Aorta (tissue), 5 donors: ENCODE measurements at regions of chr2 and their contacts with region 1.

Region 1: DNA sequence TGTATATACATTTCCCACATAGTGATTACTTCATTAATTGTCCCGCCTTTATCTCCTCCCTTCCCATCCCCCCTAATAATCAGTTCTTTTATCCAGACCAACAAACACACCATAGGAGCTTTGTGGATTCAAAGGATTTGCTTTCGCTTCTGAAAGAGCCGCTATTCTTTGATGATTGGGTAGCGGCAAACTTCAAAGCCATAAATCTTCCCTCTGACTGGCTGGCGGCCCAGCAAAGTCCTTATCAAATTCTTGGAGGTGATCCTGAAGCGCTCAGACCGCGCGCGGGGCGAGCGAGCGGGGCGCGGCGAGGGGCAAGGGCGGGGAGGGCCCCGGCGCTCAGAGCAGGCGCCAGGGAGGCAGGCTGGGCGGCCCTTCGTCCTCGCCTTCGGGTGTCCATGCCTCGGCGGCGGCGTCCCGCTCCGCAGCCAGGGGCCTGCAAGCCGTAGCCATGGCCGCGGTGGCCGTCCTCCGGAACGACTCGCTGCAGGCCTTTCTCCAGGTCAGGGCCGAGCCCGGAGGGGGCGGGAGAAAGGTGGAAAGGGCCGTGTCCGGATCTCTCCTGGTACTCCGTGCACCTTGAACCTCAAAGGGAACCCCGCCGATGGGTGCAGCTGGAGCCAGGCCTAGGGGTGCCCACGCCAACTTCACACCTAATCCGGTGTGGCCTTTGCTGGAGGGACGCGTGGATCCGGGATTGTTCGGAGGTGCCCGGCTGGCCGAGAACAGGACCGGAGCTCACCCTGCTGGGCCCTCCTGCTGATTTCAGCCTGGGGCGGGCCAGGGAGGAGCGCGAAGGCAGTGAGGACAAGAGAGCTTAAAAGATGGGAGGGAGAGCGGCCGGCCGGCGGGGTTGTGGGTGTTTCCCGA is at the start of gene SP5:
- DNase-seq: peak; percentile 50 to 83
- ATAC-seq: peak; percentile 58
- H3K4me3 ChIP-seq: peak within 1 kb of the TSS; percentile 53 to 56
- H3K27ac ChIP-seq: no peak within 1 kb of the TSS
- H3K4me1 ChIP-seq: no peaks in the 10 kb centered on the region
- H3K27me3 ChIP-seq: no peaks in the 10 kb centered on the region
- total RNA-seq, gene SP5: 3.2 to 3.6 TPM

Region 2: DNA sequence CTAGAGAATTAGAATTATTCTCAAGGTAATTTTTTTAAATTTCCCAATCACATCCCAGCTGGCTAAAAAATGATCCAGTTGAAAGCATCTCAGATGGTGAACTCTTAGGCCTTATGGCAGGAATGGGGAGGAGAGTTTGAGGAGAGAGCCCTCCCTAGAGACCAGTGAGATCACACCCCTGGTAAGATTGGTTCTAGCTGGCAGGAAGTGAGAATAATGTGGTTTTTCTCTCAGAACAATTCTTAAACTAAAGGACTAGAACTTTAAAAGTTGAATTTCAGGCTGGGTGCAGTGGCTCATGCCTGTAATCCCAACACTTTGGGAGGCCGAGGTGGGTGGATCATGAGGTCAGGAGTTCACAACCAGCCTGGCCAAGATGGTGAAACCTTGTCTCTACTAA is 417.2 kb before region 1 on chr2:
- intact Hi-C with region 1: no loop called
- DNase-seq: no peak
- ATAC-seq: no peak
- H3K4me3 ChIP-seq: no peak overlapping the region
- H3K27ac ChIP-seq: no peak overlapping the region
- H3K4me1 ChIP-seq: no peaks in the 10 kb centered on the region
- H3K27me3 ChIP-seq: no peaks in the 10 kb centered on the region

Region 3: GRCh38 chr2:170411660-170412059 is 303.6 kb before region 1 on chr2:
- intact Hi-C with region 1: loop called in 1 of 2 experiments (anchors 10 kb)
- DNase-seq: no peak
- ATAC-seq: no peak
- H3K4me3 ChIP-seq: no peak overlapping the region
- H3K27ac ChIP-seq: no peak overlapping the region
- H3K4me1 ChIP-seq: no peaks in the 10 kb centered on the region
- H3K27me3 ChIP-seq: no peaks in the 10 kb centered on the region

Region 4: GRCh38 chr2:170486730-170487129 is 228.6 kb before region 1 on chr2:
- intact Hi-C with region 1: loop called (anchors 5 to 10 kb)
- DNase-seq: no peak
- ATAC-seq: peak; percentile 63
- H3K4me3 ChIP-seq: no peak overlapping the region
- H3K27ac ChIP-seq: no peak overlapping the region
- H3K4me1 ChIP-seq: no peaks in the 10 kb centered on the region
- H3K27me3 ChIP-seq: no peaks in the 10 kb centered on the region

Region 5: GRCh38 chr2:170567429-170567828 is 147.9 kb before region 1 on chr2:
- intact Hi-C with region 1: loop called in 1 of 2 experiments (anchors 5 kb)
- DNase-seq: no peak
- ATAC-seq: no peak
- H3K4me3 ChIP-seq: no peak overlapping the region
- H3K27ac ChIP-seq: no peak overlapping the region
- H3K4me1 ChIP-seq: peaks cover 0 to 4% of the 10 kb centered on the region in 2 donors
- H3K27me3 ChIP-seq: no peaks in the 10 kb centered on the region

Region 6: GRCh38 chr2:170680172-170680941 is 34.9 kb before region 1 on chr2:
- intact Hi-C with region 1: no loop called
- DNase-seq: no peak
- ATAC-seq: no peak
- H3K4me3 ChIP-seq: no peak overlapping the region
- H3K27ac ChIP-seq: no peak overlapping the region
- H3K4me1 ChIP-seq: no peaks in the 10 kb centered on the region
- H3K27me3 ChIP-seq: no peaks in the 10 kb centered on the region

Region 7: DNA sequence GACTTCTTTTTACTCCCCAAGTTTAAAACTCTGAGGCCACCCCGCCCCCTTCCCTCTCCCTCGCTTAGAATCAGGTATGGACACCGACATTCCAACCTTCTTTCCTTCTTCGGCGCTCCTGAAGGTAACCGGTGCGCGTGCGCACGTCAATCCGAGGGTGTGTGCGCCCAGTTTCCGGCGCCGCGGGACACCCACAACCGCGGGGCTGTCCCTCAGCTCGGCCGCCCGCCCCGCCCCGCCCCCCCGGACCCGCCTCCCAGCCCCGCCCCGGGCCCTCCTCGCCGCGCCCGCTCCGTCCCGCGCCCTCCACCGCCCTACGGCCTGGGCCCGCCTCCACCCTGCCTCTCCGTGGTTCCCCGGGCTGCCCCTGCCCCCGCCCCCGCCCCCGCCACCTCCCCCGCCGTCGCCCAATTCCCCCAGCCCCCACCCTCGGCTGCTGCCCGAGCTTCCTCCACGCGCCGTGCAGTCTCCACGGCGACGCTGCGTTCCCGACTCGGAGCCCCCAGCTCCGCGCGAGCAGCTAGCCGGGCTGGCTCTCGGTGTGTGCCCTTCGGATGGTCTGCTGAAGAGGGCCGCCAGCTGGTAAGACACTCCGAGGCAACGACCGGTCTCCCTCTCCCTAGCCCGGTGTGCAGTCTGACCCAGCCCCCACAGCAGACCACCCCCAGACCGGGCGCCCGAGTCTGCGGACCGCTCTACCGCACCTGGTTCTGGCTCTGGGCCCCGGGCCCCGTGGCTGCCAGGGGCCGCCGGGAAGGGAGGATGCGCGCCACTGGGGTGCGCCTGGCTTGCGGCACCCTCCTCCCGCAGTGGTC is 55.5 kb after region 1 on chr2:
- intact Hi-C with region 1: loop called in 1 of 2 experiments (anchors 5 kb)
- DNase-seq: peak; percentile 76 to 91
- ATAC-seq: peak; percentile 94
- H3K4me3 ChIP-seq: peak overlapping the region; percentile 28 to 67
- H3K27ac ChIP-seq: peak overlapping the region in 1 of 2 donors; percentile 22
- H3K4me1 ChIP-seq: no peaks in the 10 kb centered on the region
- H3K27me3 ChIP-seq: no peaks in the 10 kb centered on the region

Region 8: DNA sequence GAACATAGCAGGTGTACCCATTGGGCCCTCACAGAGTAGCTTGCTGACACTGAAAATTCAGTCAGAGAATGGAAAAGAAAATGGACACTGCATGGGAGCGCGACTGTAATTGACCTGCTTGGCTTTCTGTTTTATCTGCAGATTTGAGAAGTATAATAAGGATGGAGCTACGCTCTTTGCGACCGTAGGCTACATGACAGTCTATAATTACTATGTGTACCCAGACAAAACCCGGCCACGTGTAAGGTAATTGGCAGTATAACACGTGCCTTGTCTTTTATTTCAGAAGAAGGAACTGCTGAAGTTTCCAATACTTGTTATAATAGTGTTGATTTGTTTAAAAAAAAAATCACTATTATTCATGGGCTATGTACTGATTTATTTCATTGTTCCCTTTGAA is 1251.0 kb after region 1 on chr2:
- intact Hi-C with region 1: no loop called
- DNase-seq: no peak
- ATAC-seq: no peak
- H3K4me3 ChIP-seq: no peak overlapping the region
- H3K27ac ChIP-seq: no peak overlapping the region
- H3K4me1 ChIP-seq: no peaks in the 10 kb centered on the region
- H3K27me3 ChIP-seq: no peaks in the 10 kb centered on the region